ENCODE measurements at regions of chr3 and their contacts with region 1.

Region 1: DNA sequence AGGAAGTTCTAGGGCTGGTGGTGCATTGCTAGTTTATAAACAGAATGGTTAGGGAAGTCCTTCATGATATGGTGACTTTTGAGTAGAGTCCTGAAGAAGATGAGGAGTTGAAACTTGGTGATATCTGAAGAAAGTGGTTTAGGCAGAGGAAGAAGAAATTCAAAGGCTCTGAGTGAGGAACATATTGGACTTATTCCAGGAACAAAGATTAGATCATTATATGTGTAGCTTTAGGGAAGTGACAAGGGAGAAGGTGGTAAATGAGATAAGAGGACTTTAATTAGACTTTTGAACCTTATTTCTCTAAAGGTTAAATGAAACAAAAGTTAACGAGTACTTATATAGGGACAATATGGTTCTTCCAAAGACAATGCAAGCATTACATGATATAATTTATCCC is 286.7 kb downstream of the DOCK3 start:
- DNase-seq: no peak
- ATAC-seq: no peak
- H3K4me3 ChIP-seq: no peak overlapping the region
- H3K4me3 Mint-ChIP-seq: no peak overlapping the region
- H3K27ac ChIP-seq: no peak overlapping the region
- H3K27ac Mint-ChIP-seq: no peak overlapping the region
- H3K4me1 ChIP-seq: no peaks in the 10 kb centered on the region
- H3K4me1 Mint-ChIP-seq: no peaks in the 10 kb centered on the region
- H3K27me3 ChIP-seq: no peaks in the 10 kb centered on the region
- H3K27me3 Mint-ChIP-seq: peaks cover 10% of the 10 kb centered on the region
- CTCF ChIP-seq: no peak

Region 2: DNA sequence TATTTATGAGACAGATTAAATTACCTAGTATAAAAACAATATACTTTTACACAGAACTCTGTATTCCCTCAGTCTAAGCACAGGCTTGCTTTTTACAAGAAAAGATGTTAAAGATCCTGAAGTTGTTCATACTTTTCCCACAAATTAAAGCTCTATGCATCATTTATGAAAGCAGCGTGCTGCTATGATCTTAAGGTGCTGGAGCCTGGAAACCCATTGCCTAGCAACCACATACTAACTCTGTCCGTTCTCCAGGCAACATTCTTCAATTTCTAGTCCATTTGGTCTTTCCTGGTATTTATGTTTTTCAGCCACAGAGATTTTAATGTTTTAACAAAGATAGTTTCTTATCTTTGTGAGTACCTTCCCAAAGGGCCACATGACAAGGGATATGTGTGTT is 25.3 kb after region 1 on chr3:
- CTCF ChIA-PET with region 1: no interaction called
- POLR2A ChIA-PET with region 1: no interaction called
- intact Hi-C with region 1: loop called in 1 of 2 experiments (anchors 1 kb)
- DNase-seq: no peak
- ATAC-seq: no peak
- H3K4me3 ChIP-seq: no peak overlapping the region
- H3K4me3 Mint-ChIP-seq: no peak overlapping the region
- H3K27ac ChIP-seq: no peak overlapping the region
- H3K27ac Mint-ChIP-seq: no peak overlapping the region
- H3K4me1 ChIP-seq: no peaks in the 10 kb centered on the region
- H3K4me1 Mint-ChIP-seq: no peaks in the 10 kb centered on the region
- H3K27me3 ChIP-seq: no peaks in the 10 kb centered on the region
- H3K27me3 Mint-ChIP-seq: no peaks in the 10 kb centered on the region
- CTCF ChIP-seq: no peak